ENCODE measurements at regions of chr2 and their contacts with region 1.

Region 1: GRCh38 chr2:109510136-109511028 is 103.4 kb downstream of the SEPTIN10 start:
- DNase-seq: peak; percentile 71
- ATAC-seq: peak; percentile 76
- H3K4me3 ChIP-seq: no peak overlapping the region
- H3K27ac ChIP-seq: no peak overlapping the region
- H3K4me1 ChIP-seq: peaks cover 8% of the 10 kb centered on the region
- H3K27me3 ChIP-seq: no peaks in the 10 kb centered on the region
- CTCF ChIP-seq: peak; percentile 92
- POLR2A ChIP-seq: no peak; the same call in 1 of the 2 replicates
- RAD21 ChIP-seq: peak; percentile 93

Region 2: DNA sequence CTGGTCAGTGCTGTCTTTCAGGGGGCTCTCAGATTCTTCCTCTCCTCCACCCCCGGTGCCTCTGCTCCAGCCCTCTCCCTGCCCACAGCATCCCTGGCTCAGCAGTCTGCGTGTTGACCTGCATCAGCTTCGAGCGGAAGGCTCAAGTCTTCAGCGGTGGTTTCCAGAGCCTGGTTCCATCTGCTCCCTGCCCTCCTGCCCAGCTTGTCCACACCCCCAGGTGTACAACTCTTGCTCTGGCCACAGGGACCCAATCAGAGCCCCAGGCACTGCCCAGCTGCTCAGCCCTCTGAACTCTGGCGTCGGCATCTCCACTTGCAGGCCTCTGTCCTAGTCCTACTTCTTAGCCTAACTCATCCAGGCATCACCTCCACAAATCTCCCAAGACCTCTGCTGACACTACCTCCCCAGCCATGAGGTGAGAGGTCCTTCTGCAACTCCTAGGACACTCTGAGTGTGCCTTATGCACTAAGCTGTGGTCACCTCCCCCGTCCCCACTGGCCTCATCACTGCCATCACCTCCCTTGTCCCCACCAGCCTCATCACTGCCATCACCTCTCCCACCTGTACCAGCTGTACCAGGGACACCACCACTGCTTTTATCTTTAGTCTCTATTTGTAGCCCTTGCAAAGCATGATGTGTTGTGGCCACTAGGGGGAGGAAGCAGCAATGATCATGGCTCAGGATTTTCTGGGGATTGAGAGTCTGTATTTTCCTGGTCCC is 582.3 kb before region 1 on chr2:
- CTCF ChIA-PET with region 1: no interaction called
- POLR2A ChIA-PET with region 1: no interaction called
- dilution Hi-C with region 1: no loop called
- in situ Hi-C with region 1: no loop called
- intact Hi-C with region 1: loop called (anchors 1 kb)
- DNase-seq: peak; percentile 64
- ATAC-seq: peak; percentile 95
- H3K4me3 ChIP-seq: no peak overlapping the region
- H3K27ac ChIP-seq: no peak overlapping the region
- H3K4me1 ChIP-seq: no peaks in the 10 kb centered on the region
- H3K27me3 ChIP-seq: peaks cover 82% of the 10 kb centered on the region
- CTCF ChIP-seq: peak; percentile 80
- POLR2A ChIP-seq: no peak
- RAD21 ChIP-seq: peak; percentile 75

Region 3: DNA sequence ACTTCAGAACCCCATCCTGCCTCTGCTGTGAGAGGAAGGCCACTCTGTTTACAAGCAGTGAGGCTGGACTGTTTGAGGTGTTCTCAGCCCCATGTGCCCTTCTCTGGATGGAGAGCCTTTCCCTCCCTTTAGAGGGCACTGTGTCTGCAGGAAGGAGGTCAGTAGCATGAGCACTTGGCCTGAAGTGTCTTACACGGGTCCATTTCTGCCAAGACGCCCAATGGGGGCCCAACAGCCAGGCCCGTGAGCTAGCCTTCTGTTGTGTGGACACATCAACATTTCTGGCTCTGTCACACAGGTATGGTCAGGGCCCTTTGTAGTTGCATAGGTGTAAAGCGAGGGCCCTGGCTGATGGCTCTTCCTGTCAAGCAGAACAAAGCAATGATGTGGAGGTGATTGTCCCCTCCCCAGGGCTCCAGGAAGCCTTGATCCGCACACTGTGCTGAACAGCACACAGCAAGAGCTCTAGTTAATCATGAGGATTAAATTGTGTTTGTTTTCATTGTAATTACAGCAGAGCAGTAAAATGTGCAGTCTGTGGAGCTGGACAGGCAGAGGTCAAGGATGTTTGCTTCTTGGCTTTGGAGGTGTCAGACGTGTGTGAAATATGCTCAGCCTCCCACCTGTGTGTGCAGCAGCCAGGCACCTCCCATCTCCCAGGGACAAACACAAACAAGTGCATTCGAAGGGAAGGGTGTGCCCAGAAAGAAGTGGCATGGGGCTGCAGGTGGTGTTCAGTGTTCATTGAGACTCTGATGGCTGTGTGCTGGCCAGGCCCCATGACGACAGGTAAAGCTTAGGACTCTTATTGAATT is 249.3 kb before region 1 on chr2:
- CTCF ChIA-PET with region 1: no interaction called
- POLR2A ChIA-PET with region 1: no interaction called
- dilution Hi-C with region 1: no loop called
- in situ Hi-C with region 1: no loop called
- intact Hi-C with region 1: loop called (anchors 5 kb)
- DNase-seq: peak; percentile 34
- ATAC-seq: no peak
- H3K4me3 ChIP-seq: no peak overlapping the region
- H3K27ac ChIP-seq: no peak overlapping the region
- H3K4me1 ChIP-seq: peaks cover 30% of the 10 kb centered on the region
- H3K27me3 ChIP-seq: no peaks in the 10 kb centered on the region
- CTCF ChIP-seq: peak; percentile 34
- POLR2A ChIP-seq: no peak
- RAD21 ChIP-seq: peak; percentile 45

Region 4: DNA sequence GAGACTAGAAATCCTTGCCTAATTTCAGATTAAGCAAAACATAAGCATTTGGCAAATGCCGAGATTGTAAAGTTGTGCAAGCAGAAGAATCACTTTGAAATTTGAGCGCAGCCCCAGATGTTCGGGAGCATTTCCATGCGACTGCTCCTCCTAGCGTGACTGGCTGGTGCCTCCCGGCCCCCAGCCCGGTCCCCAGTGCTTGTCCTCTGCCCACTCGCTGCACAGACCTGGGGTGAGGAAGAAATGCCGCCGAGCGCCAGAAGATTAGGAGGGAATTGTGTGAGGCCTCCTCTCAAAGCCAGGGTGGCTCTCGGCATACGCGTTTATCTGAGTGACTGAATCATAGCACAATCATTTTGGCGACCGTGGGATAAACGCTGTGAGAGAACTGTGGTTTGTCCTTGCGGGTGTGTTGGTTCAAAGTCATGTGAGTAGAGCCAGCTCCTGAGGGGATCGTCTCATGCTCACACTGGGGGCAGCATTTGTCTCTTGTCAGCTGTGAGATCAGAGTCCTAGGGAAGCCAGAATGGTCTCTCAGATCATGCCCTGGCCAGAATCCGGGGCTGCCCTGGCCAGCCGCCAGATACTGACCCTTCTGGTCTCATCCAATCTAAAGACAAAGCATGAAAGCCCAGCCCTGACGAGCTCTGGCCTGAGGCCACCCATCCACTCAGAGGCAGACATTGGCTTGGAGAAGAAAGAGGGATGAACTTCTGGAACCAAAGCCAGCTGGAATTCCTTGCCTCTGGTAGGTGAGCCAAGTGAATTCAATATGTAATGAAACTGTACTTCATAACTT is 192.0 kb before region 1 on chr2:
- CTCF ChIA-PET with region 1: interaction called, 4 read pairs
- POLR2A ChIA-PET with region 1: no interaction called
- dilution Hi-C with region 1: no loop called
- in situ Hi-C with region 1: no loop called
- intact Hi-C with region 1: loop called (anchors 2 kb)
- DNase-seq: peak; percentile 98
- ATAC-seq: peak; percentile 60
- H3K4me3 ChIP-seq: peak overlapping the region; percentile 2
- H3K27ac ChIP-seq: peak overlapping the region; percentile 73
- H3K4me1 ChIP-seq: peaks cover 41% of the 10 kb centered on the region
- H3K27me3 ChIP-seq: no peaks in the 10 kb centered on the region
- CTCF ChIP-seq: peak; percentile 42
- POLR2A ChIP-seq: peak; percentile 53; the same call in 1 of the 2 replicates
- RAD21 ChIP-seq: peak; percentile 31

Region 5: DNA sequence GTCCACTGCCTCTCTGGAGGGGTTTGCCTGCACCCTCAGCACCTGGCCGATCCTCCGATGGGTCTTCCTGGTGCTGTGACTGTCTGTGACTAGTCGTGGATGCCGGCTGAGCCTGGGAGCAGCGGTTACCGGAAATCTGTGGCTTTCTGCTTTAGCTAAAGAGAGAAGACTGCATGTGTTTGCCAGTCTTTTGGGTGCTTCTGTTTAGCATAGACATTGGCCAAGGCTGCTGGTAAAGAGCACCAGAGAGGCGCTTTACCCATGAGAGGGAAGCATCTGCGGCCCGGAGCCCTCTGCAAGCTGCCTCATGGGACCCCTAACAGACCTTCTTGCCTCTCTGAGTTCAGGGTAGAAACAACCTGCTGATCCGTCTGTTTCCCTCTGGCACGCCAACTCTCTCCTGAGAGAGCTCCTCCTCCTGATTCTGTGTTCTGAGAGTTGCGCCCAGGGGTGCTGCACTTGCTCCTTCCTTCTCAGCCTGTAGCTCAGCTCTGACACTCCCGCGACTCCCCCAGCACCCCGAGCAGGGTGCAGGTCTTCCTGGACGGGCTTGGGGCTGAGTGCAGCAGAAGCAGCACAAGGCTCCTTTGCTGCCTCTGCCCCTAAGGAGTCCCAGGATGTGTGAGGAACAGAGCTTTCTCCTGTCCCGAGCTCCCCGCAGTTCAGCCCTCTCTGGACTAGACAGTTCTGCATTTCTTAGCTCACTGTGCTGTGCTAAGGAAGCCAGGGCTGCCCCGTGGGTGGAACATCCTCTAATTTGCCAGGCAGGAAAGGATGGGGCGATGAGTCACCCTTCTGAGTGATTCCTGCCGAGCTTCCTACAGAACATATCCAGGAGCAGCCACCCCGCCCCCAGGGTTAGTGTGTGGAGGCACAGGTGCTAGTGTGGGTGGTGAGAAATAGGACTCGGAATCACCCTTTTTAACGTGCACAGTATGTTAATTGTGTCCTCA is 178.2 kb before region 1 on chr2:
- CTCF ChIA-PET with region 1: interaction called, 6 read pairs
- POLR2A ChIA-PET with region 1: no interaction called
- dilution Hi-C with region 1: no loop called
- in situ Hi-C with region 1: no loop called
- intact Hi-C with region 1: loop called (anchors 2 kb)
- DNase-seq: peak; percentile 96
- ATAC-seq: peak; percentile 84
- H3K4me3 ChIP-seq: no peak overlapping the region
- H3K27ac ChIP-seq: peak overlapping the region; percentile 87
- H3K4me1 ChIP-seq: peaks cover 46% of the 10 kb centered on the region
- H3K27me3 ChIP-seq: no peaks in the 10 kb centered on the region
- CTCF ChIP-seq: no peak
- POLR2A ChIP-seq: peak; percentile 74
- RAD21 ChIP-seq: peak; percentile 33; the same call in 1 of the 2 replicates

Region 6: DNA sequence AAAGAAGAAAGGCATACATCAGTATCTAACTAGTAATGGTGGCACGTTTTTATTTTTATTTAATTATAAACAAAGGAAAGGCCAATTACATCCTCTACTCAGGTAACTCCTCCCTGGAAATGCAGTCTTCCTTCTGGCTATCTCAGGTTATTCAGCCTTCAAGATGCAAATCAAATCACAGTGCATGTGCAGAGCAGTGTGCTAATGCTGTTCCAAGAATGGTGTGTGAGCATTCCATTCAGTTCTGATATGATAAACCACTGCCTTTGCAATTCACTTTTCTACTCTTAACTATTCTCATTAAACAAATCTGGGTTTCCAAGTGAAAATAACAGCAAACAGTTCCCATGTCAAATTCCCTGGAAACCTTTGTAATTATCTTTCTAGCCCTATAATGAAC is 65.0 kb after region 1 on chr2:
- CTCF ChIA-PET with region 1: no interaction called
- POLR2A ChIA-PET with region 1: no interaction called
- dilution Hi-C with region 1: no loop called
- in situ Hi-C with region 1: no loop called
- intact Hi-C with region 1: loop called (anchors 10 kb)
- DNase-seq: no peak
- ATAC-seq: no peak
- H3K4me3 ChIP-seq: no peak overlapping the region
- H3K27ac ChIP-seq: no peak overlapping the region
- H3K4me1 ChIP-seq: no peaks in the 10 kb centered on the region
- H3K27me3 ChIP-seq: no peaks in the 10 kb centered on the region
- CTCF ChIP-seq: no peak
- POLR2A ChIP-seq: no peak
- RAD21 ChIP-seq: no peak

Region 7: DNA sequence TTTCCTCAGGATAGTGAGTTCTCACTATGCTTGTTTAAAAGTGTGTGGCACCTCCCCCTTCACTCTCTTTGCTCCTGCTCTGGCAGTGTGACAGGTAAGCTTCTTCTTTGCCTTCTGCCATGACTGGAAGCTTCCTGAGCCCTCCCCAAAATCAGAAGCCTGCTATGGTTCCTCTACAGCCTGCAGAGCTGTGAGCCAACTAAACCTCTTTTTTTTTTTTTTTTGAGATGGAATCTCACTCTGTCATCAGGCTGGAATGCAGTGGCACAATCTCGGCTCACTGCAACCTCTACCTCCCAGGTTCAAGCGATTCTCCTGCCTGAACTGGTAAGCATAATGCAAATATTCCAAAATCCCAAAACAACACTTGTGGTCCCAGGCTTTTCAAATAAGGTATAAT is 183.8 kb after region 1 on chr2:
- CTCF ChIA-PET with region 1: no interaction called
- POLR2A ChIA-PET with region 1: no interaction called
- dilution Hi-C with region 1: no loop called
- in situ Hi-C with region 1: no loop called
- intact Hi-C with region 1: no loop called
- DNase-seq: no peak
- ATAC-seq: peak; percentile 54
- H3K4me3 ChIP-seq: no peak overlapping the region
- H3K27ac ChIP-seq: no peak overlapping the region
- H3K4me1 ChIP-seq: peaks cover 4% of the 10 kb centered on the region; the same call in 1 of the 2 replicates
- H3K27me3 ChIP-seq: peaks cover 4% of the 10 kb centered on the region
- CTCF ChIP-seq: no peak
- POLR2A ChIP-seq: no peak
- RAD21 ChIP-seq: no peak